OCI-LY7 (cell line): ENCODE measurements at regions of chr12 and their contacts with region 1.

Region 1: DNA sequence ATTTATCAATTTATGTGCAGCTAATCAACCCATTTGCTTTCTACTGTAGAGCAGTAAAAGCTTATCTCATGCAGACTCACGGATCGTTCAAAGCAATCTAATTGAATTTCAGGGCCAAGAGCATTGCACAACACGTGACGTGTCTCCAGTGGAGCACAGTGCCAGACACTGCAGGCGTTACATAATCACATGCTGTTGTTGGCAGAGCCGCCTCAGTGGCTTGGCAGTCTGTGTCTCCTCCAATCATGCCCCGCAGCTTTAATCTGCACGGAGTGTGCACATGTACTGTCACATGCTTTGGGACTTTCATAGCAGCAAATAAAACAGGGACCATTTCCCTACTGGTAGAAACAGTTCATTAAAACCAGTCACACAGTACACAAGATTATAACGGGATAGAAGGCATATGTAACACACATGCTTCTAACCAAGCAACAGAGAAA is 309.3 kb downstream of the ITPR2 start:
- DNase-seq: no peak
- H3K4me3 ChIP-seq: no peak overlapping the region
- H3K27ac ChIP-seq: no peak overlapping the region
- H3K4me1 ChIP-seq: no peaks in the 10 kb centered on the region
- CTCF ChIP-seq: no peak

Region 2: DNA sequence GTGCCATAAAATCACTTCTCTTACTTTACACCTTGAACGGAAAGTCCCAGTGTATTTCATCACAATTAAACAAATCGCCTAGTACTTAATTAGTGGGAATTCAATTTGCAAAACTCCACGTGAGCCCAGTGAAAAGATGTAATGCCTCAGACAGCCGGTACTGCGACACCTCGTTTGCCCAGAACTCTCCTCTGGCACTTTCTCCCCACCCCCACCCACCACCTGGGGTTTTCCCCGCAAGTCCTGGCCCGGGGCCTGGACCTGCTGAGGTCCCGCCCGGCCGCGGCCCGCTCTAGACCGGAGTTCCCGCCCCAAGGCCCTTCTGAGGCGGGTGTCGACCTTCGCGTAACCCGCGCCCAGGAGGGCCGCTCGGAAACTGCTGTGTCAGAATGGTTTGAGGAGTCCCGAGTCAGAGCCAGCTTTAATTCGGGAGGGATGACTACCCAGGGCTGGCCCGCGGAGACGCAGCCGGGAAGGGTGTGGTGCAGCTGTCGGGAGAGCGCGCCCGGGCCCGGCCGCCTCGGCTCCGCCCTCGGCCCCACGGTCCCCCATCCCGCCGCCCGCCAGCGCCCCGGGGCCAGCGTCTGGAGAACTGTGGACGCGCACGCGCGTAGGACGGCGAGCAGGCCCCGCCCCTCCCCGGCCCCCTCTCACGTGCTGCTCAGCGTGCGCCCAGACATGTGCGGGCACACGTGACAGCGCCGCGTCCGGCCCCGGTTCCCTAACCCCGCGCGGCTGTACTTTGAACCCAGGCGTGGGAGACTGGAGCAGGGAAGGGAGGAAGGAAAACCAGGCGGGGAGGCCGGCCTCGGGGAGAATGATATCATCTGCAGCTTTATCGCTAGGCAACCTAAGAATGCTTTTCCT is 409.6 kb before region 1 on chr12:
- CTCF ChIA-PET with region 1: no interaction called
- POLR2A ChIA-PET with region 1: no interaction called
- intact Hi-C with region 1: loop called (anchors 10 kb)
- DNase-seq: no peak
- H3K4me3 ChIP-seq: no peak overlapping the region
- H3K27ac ChIP-seq: no peak overlapping the region
- H3K4me1 ChIP-seq: no peaks in the 10 kb centered on the region
- CTCF ChIP-seq: no peak

Region 3: GRCh38 chr12:26327975-26328644 is 195.6 kb before region 1 on chr12:
- CTCF ChIA-PET with region 1: no interaction called
- POLR2A ChIA-PET with region 1: no interaction called
- intact Hi-C with region 1: no loop called
- DNase-seq: peak; percentile 40
- H3K4me3 ChIP-seq: no peak overlapping the region
- H3K27ac ChIP-seq: peak overlapping the region; percentile 13
- H3K4me1 ChIP-seq: peaks cover 13% of the 10 kb centered on the region
- CTCF ChIP-seq: no peak